Endothelial cell of umbilical vein (primary cell): ENCODE measurements at regions of chr10 and their contacts with region 1.

Region 1: GRCh38 chr10:31864834-31865518 is 63.7 kb downstream of the ARHGAP12 start:
- DNase-seq: peak; percentile 85
- H3K4me3 ChIP-seq: peak overlapping the region in 1 of 3 experiments; percentile 60
- H3K27ac ChIP-seq: peak overlapping the region; percentile 29
- H3K4me1 ChIP-seq: peaks cover 22% of the 10 kb centered on the region
- H3K27me3 ChIP-seq: no peaks in the 10 kb centered on the region
- CTCF ChIP-seq: no peak
- POLR2A ChIP-seq: no peak

Region 2: DNA sequence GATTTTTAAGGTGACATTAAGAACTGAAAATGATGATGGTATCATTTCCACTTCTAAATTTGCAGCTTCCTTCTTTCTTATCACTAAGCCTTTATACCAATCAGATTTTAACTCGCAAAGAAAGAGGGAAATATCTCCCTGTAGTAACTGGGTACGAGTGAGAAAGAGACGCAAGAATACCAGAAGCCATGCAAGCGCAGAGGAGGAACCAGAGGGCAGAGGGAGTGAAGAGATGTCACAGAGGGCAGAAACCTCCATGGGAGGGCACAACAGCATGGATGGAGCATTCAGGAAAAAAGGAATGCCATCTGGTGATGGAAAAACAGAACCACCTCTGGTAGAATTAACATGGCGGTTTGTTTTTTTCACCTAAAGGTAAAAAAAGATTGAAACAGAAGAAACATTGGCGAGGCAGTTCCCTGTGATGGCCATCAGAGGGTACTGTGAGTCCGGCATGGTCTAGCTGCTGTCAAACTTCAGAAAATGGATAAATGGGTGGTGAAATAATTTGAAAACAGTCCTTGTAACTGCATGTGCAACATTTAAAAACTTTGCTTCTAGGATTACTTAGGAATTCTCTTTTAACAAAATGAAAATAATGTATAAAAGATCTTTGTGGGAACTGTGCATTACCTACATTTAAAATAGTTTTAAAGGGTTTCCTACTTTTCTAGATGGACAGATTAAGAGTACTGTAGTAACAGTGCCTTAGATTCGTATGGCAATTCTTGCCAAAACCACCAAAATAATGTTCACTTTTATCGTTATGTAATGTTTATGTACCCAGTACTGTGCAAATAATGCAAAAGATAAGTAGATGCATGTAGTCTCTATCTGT is 28.2 kb before region 1 on chr10:
- CTCF ChIA-PET with region 1: interaction called, 27 read pairs
- POLR2A ChIA-PET with region 1: no interaction called
- dilution Hi-C with region 1: no loop called
- intact Hi-C with region 1: no loop called
- DNase-seq: peak; percentile 44
- H3K4me3 ChIP-seq: no peak overlapping the region
- H3K27ac ChIP-seq: no peak overlapping the region
- H3K4me1 ChIP-seq: peaks cover 8% of the 10 kb centered on the region
- H3K27me3 ChIP-seq: no peaks in the 10 kb centered on the region
- CTCF ChIP-seq: peak; percentile 65 to 67
- POLR2A ChIP-seq: no peak

Region 3: GRCh38 chr10:31896947-31897384 is 32.0 kb after region 1 on chr10:
- CTCF ChIA-PET with region 1: interaction called, 19 read pairs
- POLR2A ChIA-PET with region 1: no interaction called
- dilution Hi-C with region 1: no loop called
- intact Hi-C with region 1: no loop called
- DNase-seq: peak; percentile 87
- H3K4me3 ChIP-seq: no peak overlapping the region
- H3K27ac ChIP-seq: peak overlapping the region; percentile 62
- H3K4me1 ChIP-seq: peaks cover 21% of the 10 kb centered on the region
- H3K27me3 ChIP-seq: no peaks in the 10 kb centered on the region
- CTCF ChIP-seq: no peak
- POLR2A ChIP-seq: no peak

Region 4: DNA sequence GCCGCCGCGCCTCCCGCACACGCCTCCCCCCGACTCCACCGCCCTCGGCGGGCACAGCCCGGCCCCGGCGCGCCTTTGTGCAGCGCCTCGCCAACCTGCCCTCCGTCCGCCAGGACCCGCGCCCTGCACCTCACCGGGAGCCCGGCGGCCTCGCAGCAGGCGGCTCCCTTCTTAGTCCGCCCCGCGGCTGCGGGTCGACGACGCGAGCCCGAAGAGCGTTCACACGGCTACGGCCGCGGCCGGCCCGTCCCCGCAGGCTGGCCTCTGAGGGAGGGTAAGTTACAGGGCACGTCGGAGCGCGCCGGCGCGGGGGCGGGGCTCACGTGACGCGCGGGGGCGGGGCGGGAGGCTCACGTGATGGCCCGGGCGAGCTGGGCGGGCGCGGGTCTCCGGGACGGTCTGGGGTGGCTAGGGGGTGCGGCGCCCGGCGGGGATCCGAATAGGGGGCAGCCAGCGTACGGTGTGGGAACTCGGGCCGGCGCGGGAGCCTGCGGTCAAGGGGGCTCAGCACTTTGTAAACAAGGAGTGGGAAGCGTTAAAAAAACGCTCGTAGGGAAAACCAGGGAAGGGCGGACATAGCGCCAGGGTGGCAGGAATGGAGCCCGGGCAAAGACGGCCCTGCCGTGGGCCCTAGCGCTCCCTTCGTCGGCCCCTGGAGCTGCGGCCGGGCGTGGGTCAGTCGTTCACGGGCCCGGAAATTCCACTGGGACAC is 63.7 kb after region 1 on chr10 and contains the start of gene ARHGAP12:
- CTCF ChIA-PET with region 1: interaction called, 80 read pairs
- POLR2A ChIA-PET with region 1: interaction called, 6 read pairs
- dilution Hi-C with region 1: no loop called
- intact Hi-C with region 1: loop called (anchors 1 kb)
- DNase-seq: peak; percentile 89
- H3K4me3 ChIP-seq: peak within 1 kb of the TSS; percentile 74 to 90 (median 80)
- H3K27ac ChIP-seq: peak within 1 kb of the TSS; percentile 70
- H3K4me1 ChIP-seq: peaks cover 26% of the 10 kb centered on the region
- H3K27me3 ChIP-seq: no peaks in the 10 kb centered on the region
- CTCF ChIP-seq: no peak
- POLR2A ChIP-seq: peak; percentile 54
- total RNA-seq, gene ARHGAP12: 19.2 and 19.3 TPM in 2 replicates

Region 5: GRCh38 chr10:31977440-31978155 is 112.6 kb after region 1 on chr10:
- CTCF ChIA-PET with region 1: interaction called, 12 read pairs
- POLR2A ChIA-PET with region 1: no interaction called
- dilution Hi-C with region 1: no loop called
- intact Hi-C with region 1: no loop called
- DNase-seq: peak; percentile 89
- H3K4me3 ChIP-seq: peak overlapping the region in 1 of 3 experiments; percentile 45
- H3K27ac ChIP-seq: peak overlapping the region; percentile 93
- H3K4me1 ChIP-seq: peaks cover 17% of the 10 kb centered on the region
- H3K27me3 ChIP-seq: no peaks in the 10 kb centered on the region
- CTCF ChIP-seq: no peak
- POLR2A ChIP-seq: no peak

Region 6: GRCh38 chr10:32017021-32017420 is 152.0 kb after region 1 on chr10:
- CTCF ChIA-PET with region 1: interaction called, 16 read pairs
- POLR2A ChIA-PET with region 1: no interaction called
- dilution Hi-C with region 1: no loop called
- intact Hi-C with region 1: no loop called
- DNase-seq: no peak
- H3K4me3 ChIP-seq: no peak overlapping the region
- H3K27ac ChIP-seq: no peak overlapping the region
- H3K4me1 ChIP-seq: no peaks in the 10 kb centered on the region
- H3K27me3 ChIP-seq: no peaks in the 10 kb centered on the region
- CTCF ChIP-seq: no peak
- POLR2A ChIP-seq: no peak